B cell (primary cell): ENCODE measurements at regions of chr1 and their contacts with region 1.

Region 1: DNA sequence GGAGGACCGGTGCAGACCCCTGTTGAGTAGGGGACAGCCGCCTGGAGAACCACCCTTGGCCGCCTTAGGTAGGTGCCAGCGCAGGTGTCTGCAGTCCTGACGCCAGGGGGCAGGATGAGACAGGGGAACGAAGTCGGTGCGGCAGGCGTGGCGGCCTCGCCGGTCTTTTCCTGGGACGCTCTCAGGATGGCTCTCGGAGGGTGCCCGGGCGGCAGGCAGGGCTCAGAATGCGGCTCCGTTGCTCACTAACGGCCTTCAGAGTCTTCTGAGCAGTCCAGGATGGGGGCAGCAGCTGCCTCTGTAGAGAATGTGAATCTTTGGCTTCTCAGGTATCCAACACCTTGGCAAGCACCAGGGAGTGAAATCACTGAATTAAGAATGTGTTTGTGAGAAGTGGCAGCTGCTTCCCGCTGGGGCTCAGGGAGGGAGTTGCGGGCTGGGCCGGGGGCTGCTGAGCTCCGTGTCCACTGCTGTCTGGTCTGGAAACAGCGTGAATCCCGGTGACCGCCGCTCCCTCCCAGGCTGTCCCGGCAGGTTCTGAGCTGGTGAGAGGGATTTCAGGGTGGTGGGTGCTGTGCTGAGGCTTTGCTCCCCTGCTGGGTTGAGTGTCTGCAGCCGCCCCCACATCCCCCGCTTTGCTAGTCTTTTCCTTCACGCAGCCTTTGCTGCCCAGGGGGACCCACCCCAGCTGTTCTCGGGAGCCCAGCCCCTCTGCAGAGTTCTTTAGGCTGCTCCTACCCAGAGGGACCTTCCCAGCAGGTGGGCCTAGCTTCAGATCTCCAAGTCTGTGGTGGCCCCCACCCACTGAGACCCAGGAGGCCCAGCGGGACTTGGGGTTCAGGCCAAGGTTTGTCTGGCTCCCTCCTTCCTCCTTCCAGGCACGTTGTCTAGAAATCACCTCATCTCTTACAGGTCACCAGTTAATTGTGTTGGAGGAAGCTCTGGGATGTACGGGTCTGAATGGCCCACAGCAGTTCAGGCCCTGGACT is 11.1 kb upstream of the C1orf174 start:
- DNase-seq: peak; percentile 84
- ATAC-seq: peak; percentile 86
- H3K4me3 ChIP-seq: no peak overlapping the region
- H3K4me3 Mint-ChIP-seq: peak overlapping the region; percentile 72
- H3K27ac ChIP-seq: no peak overlapping the region
- H3K27ac Mint-ChIP-seq: peak overlapping the region; percentile 6
- H3K4me1 ChIP-seq: peaks cover 4 to 23% of the 10 kb centered on the region in 2 donors
- H3K4me1 Mint-ChIP-seq: peaks cover 25% of the 10 kb centered on the region
- H3K27me3 ChIP-seq: peaks cover 0 to 15% (median 0%) of the 10 kb centered on the region in 4 experiments
- H3K27me3 Mint-ChIP-seq: peaks cover 6% of the 10 kb centered on the region
- CTCF ChIP-seq: peak; percentile 90

Region 2: GRCh38 chr1:3530086-3530925 is 380.8 kb before region 1 on chr1:
- CTCF ChIA-PET with region 1: no interaction called
- POLR2A ChIA-PET with region 1: no interaction called
- intact Hi-C with region 1: no loop called
- DNase-seq: no peak
- ATAC-seq: no peak
- H3K4me3 ChIP-seq: peak overlapping the region; percentile 45 to 74 (median 61)
- H3K4me3 Mint-ChIP-seq: peak overlapping the region; percentile 83
- H3K27ac ChIP-seq: peak overlapping the region; percentile 52 to 71
- H3K27ac Mint-ChIP-seq: peak overlapping the region; percentile 85
- H3K4me1 ChIP-seq: peaks cover 9 to 14% of the 10 kb centered on the region in 2 donors
- H3K4me1 Mint-ChIP-seq: peaks cover 18% of the 10 kb centered on the region
- H3K27me3 ChIP-seq: no peaks in the 10 kb centered on the region
- H3K27me3 Mint-ChIP-seq: no peaks in the 10 kb centered on the region
- CTCF ChIP-seq: no peak

Region 3: DNA sequence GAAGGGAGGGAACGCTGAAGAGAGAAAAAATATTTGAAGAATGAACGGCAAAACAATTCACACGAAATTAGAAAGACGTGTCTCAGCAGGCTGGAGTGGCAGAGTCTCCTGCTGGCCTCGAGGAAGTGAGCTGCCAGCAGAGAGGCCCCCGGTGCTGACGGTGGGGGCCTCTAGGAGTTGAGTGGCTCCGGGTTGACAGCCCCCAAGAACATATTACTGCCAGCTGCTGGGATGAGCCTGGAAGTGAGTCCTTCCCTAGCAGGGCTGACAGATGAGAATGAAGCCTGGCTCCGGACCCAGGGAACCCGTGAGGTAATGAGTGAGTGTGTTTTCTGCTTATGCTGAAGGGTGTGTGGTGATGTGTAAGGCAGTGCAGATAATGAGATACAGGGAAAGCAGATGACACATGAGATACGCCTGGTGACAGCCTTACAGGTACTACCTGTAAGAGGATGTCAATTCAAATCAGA is 91.4 kb before region 1 on chr1:
- CTCF ChIA-PET with region 1: no interaction called
- POLR2A ChIA-PET with region 1: no interaction called
- intact Hi-C with region 1: no loop called
- DNase-seq: no peak
- ATAC-seq: no peak
- H3K4me3 ChIP-seq: no peak overlapping the region
- H3K4me3 Mint-ChIP-seq: no peak overlapping the region
- H3K27ac ChIP-seq: no peak overlapping the region
- H3K27ac Mint-ChIP-seq: no peak overlapping the region
- H3K4me1 ChIP-seq: no peaks in the 10 kb centered on the region
- H3K4me1 Mint-ChIP-seq: no peaks in the 10 kb centered on the region
- H3K27me3 ChIP-seq: no peaks in the 10 kb centered on the region
- H3K27me3 Mint-ChIP-seq: no peaks in the 10 kb centered on the region
- CTCF ChIP-seq: no peak

Region 4: GRCh38 chr1:4087530-4088420 is 176.6 kb after region 1 on chr1:
- CTCF ChIA-PET with region 1: interaction called, 9 read pairs
- POLR2A ChIA-PET with region 1: no interaction called
- intact Hi-C with region 1: loop called (anchors 2 kb)
- DNase-seq: no peak
- ATAC-seq: no peak
- H3K4me3 ChIP-seq: no peak overlapping the region
- H3K4me3 Mint-ChIP-seq: no peak overlapping the region
- H3K27ac ChIP-seq: no peak overlapping the region
- H3K27ac Mint-ChIP-seq: no peak overlapping the region
- H3K4me1 ChIP-seq: no peaks in the 10 kb centered on the region
- H3K4me1 Mint-ChIP-seq: no peaks in the 10 kb centered on the region
- H3K27me3 ChIP-seq: no peaks in the 10 kb centered on the region
- H3K27me3 Mint-ChIP-seq: no peaks in the 10 kb centered on the region
- CTCF ChIP-seq: no peak